GM12878 (cell line): ENCODE measurements at regions of chr9 and their contacts with region 1.

Region 1: GRCh38 chr9:115204904-115205453 is 87.0 kb upstream of the TNC start:
- DNase-seq: no peak
- ATAC-seq: peak; percentile 72
- H3K4me3 ChIP-seq: no peak overlapping the region
- H3K27ac ChIP-seq: no peak overlapping the region
- H3K4me1 ChIP-seq: peaks cover 22% of the 10 kb centered on the region
- H3K27me3 ChIP-seq: no peaks in the 10 kb centered on the region
- CTCF ChIP-seq: no peak
- EP300 ChIP-seq: peak in 1 of 2 experiments; percentile 13; a peak in 1 of 4 replicates
- POLR2A ChIP-seq: no peak
- RAD21 ChIP-seq: no peak

Region 2: GRCh38 chr9:114691046-114691955 is 513.7 kb before region 1 on chr9:
- CTCF ChIA-PET with region 1: no interaction called
- POLR2A ChIA-PET with region 1: no interaction called
- RAD21 ChIA-PET with region 1: no interaction called
- SMC1A ChIA-PET with region 1: no interaction called
- in situ Hi-C with region 1: no loop called
- intact Hi-C with region 1: loop called (anchors 10 kb)
- DNase-seq: peak; percentile 36
- ATAC-seq: peak; percentile 88
- H3K4me3 ChIP-seq: no peak overlapping the region
- H3K27ac ChIP-seq: no peak overlapping the region
- H3K4me1 ChIP-seq: peaks cover 21% of the 10 kb centered on the region
- H3K27me3 ChIP-seq: peaks cover 0 to 10% of the 10 kb centered on the region in 2 experiments; a peak in 2 of 4 replicates
- CTCF ChIP-seq: no peak
- EP300 ChIP-seq: peak; percentile 48 to 53; a peak in 2 of 4 replicates
- POLR2A ChIP-seq: no peak
- RAD21 ChIP-seq: no peak

Region 3: GRCh38 chr9:115035841-115036612 is 169.0 kb before region 1 on chr9:
- CTCF ChIA-PET with region 1: no interaction called
- POLR2A ChIA-PET with region 1: no interaction called
- RAD21 ChIA-PET with region 1: interaction called, 3 read pairs
- SMC1A ChIA-PET with region 1: no interaction called
- in situ Hi-C with region 1: no loop called
- intact Hi-C with region 1: loop called (anchors 2 kb)
- DNase-seq: peak; percentile 77
- ATAC-seq: peak; percentile 90
- H3K4me3 ChIP-seq: no peak overlapping the region
- H3K27ac ChIP-seq: no peak overlapping the region
- H3K4me1 ChIP-seq: peaks cover 17% of the 10 kb centered on the region
- H3K27me3 ChIP-seq: no peaks in the 10 kb centered on the region; a peak in 2 of 4 replicates
- CTCF ChIP-seq: no peak
- EP300 ChIP-seq: peak; percentile 56 to 90; a peak in 2 of 4 replicates
- POLR2A ChIP-seq: no peak
- RAD21 ChIP-seq: no peak